Naive thymus-derived CD8-positive, alpha-beta T cell (primary cell): ENCODE measurements at regions of chr1 and their contacts with region 1.

Region 1: GRCh38 chr1:114511032-114511785 is at the start of gene TRIM33:
- DNase-seq: peak; percentile 86 to 95 (median 92)
- ATAC-seq: peak; percentile 70 to 79
- H3K4me3 Mint-ChIP-seq: peak within 1 kb of the TSS; percentile 83 to 100 (median 97)
- H3K27ac Mint-ChIP-seq: peak within 1 kb of the TSS; percentile 98 to 100 (median 99)
- H3K4me1 Mint-ChIP-seq: peaks cover 33 to 57% (median 54%) of the 10 kb centered on the region in 4 donors
- H3K27me3 Mint-ChIP-seq: no peaks in the 10 kb centered on the region
- polyA plus RNA-seq, gene TRIM33: 18.2 to 32.2 (median 23.2) TPM

Region 2: DNA sequence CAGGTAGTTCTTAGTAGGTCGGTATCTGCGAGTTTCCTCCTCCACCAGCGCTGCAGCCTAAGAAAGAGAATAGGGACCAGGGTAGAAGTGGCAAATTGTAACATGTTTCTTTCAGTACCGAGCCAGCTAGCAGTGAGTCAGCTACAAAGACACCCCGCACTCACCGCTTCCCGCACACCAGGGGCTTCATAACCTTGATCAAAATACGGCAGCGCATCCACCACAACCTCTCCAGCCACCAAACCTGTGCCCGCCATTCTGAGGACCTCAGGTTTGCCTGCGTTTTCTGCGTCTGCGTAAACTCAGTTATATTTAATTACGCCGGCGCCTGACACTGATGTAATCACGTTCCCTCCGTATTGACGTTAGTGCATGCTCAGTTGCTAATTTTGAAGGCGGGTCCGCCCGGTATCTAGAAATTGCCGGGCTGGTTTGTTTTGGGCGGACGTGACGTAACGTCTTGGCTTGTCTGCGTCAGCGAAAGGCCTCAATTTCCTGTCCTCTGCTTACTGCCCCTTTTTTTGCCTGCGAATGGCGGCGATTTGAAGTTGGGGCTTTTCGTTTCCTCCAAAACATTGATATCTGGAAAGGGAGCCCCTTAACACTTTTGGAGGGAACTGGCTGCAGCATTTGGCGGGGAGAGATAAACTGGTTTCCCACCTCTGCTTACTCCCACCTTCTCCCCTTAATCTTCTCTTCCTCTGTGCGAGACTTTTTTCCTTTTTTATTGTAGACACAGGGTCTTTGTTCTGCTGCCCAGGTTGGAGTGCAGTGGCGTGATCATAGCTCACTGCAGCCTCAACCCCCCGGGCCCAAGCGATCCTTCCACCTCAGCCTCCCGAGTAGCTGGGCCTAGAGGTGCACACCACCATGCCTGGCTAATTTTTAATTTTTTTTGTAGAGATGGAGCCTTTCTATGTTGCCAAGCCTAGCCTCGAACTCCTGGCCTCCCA is 70.4 kb after region 1 on chr1 and contains the start of gene BCAS2:
- POLR2A ChIA-PET with region 1: interaction called, 40 read pairs
- DNase-seq: peak; percentile 77 to 98 (median 96)
- ATAC-seq: peak; percentile 90 to 96
- H3K4me3 Mint-ChIP-seq: peak within 1 kb of the TSS; percentile 90 to 99 (median 96)
- H3K27ac Mint-ChIP-seq: peak within 1 kb of the TSS; percentile 96 to 100 (median 99)
- H3K4me1 Mint-ChIP-seq: peaks cover 11 to 49% (median 39%) of the 10 kb centered on the region in 4 donors
- H3K27me3 Mint-ChIP-seq: peaks cover 0 to 2% (median 0%) of the 10 kb centered on the region in 5 donors
- polyA plus RNA-seq, gene BCAS2: 90.0 to 100.0 (median 97.2) TPM